Activated CD4-positive, alpha-beta T cell treated with anti-CD3 and anti-CD28 coated beads for 36 hours (primary cell): ENCODE measurements at regions of chr1 and their contacts with region 1.

Region 1: GRCh38 chr1:12124693-12125421 is 41.9 kb upstream of the TNFRSF1B start:
- DNase-seq: peak; percentile 86
- ATAC-seq: peak; percentile 35
- H3K4me3 Mint-ChIP-seq: no peak overlapping the region
- H3K27ac Mint-ChIP-seq: peak overlapping the region; percentile 20
- H3K4me1 Mint-ChIP-seq: peaks cover 49% of the 10 kb centered on the region
- H3K27me3 Mint-ChIP-seq: no peaks in the 10 kb centered on the region

Region 2: DNA sequence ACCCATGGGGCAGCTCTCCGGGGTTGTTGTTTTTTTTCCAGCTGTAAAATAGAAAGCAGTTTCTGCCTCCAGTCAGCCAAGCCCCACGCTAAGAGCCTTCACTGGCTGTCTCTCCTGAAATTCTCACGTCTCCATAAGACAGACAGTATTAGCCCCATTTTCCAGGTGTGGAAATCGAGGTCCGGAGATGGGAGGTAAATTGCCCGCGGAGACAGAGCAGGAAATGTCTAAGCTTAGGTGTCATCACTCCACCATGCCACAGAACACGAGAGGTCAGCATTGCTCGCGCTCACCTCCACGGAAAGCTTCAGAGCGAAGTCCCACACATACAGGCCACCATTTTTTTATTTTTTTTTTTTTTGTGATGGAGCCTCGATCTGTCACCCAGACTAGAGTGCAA is 17.1 kb before region 1 on chr1:
- CTCF ChIA-PET with region 1: interaction called, 11 read pairs
- POLR2A ChIA-PET with region 1: no interaction called
- intact Hi-C with region 1: no loop called
- DNase-seq: no peak
- ATAC-seq: no peak
- H3K4me3 Mint-ChIP-seq: no peak overlapping the region
- H3K27ac Mint-ChIP-seq: no peak overlapping the region
- H3K4me1 Mint-ChIP-seq: no peaks in the 10 kb centered on the region
- H3K27me3 Mint-ChIP-seq: no peaks in the 10 kb centered on the region

Region 3: DNA sequence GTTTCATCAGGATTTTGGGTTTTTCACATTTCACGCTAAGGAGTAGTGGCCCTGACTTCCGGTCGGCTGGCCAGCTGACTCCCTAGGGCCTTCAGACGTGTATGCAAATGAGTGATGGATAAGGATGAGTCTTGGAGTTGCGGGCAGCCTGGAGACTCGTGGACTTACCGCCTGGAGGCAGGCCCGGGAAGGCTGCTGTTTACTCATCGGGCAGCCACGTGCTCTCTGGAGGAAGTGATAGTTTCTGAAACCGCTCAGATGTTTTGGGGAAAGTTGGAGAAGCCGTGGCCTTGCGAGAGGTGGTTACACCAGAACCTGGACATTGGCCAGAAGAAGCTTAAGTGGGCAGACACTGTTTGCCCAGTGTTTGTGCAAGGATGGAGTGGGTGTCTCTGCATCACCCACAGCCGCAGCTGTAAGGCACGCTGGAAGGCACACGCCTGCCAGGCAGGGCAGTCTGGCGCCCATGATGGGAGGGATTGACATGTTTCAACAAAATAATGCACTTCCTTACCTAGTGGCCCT is 18.8 kb after region 1 on chr1:
- CTCF ChIA-PET with region 1: interaction called, 13 read pairs
- POLR2A ChIA-PET with region 1: no interaction called
- intact Hi-C with region 1: no loop called
- DNase-seq: peak; percentile 51
- ATAC-seq: peak; percentile 45
- H3K4me3 Mint-ChIP-seq: no peak overlapping the region
- H3K27ac Mint-ChIP-seq: peak overlapping the region; percentile 48
- H3K4me1 Mint-ChIP-seq: peaks cover 41% of the 10 kb centered on the region
- H3K27me3 Mint-ChIP-seq: no peaks in the 10 kb centered on the region

Region 4: GRCh38 chr1:12177999-12178441 is 53.2 kb after region 1 on chr1:
- CTCF ChIA-PET with region 1: interaction called, 48 read pairs
- POLR2A ChIA-PET with region 1: interaction called, 6 read pairs
- intact Hi-C with region 1: loop called (anchors 1 to 5 kb)
- DNase-seq: peak; percentile 97
- ATAC-seq: peak; percentile 78
- H3K4me3 Mint-ChIP-seq: peak overlapping the region; percentile 63
- H3K27ac Mint-ChIP-seq: peak overlapping the region; percentile 96
- H3K4me1 Mint-ChIP-seq: peaks cover 86% of the 10 kb centered on the region
- H3K27me3 Mint-ChIP-seq: no peaks in the 10 kb centered on the region

Region 5: GRCh38 chr1:12208764-12209494 is 84.1 kb after region 1 on chr1:
- CTCF ChIA-PET with region 1: interaction called, 265 read pairs
- POLR2A ChIA-PET with region 1: interaction called, 4 read pairs
- intact Hi-C with region 1: loop called (anchors 1 kb)
- DNase-seq: peak; percentile 93
- ATAC-seq: peak; percentile 68
- H3K4me3 Mint-ChIP-seq: no peak overlapping the region
- H3K27ac Mint-ChIP-seq: peak overlapping the region; percentile 17
- H3K4me1 Mint-ChIP-seq: peaks cover 47% of the 10 kb centered on the region
- H3K27me3 Mint-ChIP-seq: no peaks in the 10 kb centered on the region

Region 6: GRCh38 chr1:12229835-12230548 is 105.1 kb after region 1 on chr1 and contains the start of gene VPS13D:
- CTCF ChIA-PET with region 1: interaction called, 32 read pairs
- POLR2A ChIA-PET with region 1: no interaction called
- intact Hi-C with region 1: loop called in 1 of 2 experiments (anchors 1 kb)
- DNase-seq: peak; percentile 93
- ATAC-seq: peak; percentile 92
- H3K4me3 Mint-ChIP-seq: peak within 1 kb of the TSS; percentile 83
- H3K27ac Mint-ChIP-seq: peak within 1 kb of the TSS; percentile 47
- H3K4me1 Mint-ChIP-seq: peaks cover 23% of the 10 kb centered on the region
- H3K27me3 Mint-ChIP-seq: no peaks in the 10 kb centered on the region
- total RNA-seq, gene VPS13D: 20.6 to 22.9 TPM

Region 7: GRCh38 chr1:12619792-12620487 is 495.1 kb after region 1 on chr1:
- CTCF ChIA-PET with region 1: no interaction called
- POLR2A ChIA-PET with region 1: no interaction called
- intact Hi-C with region 1: loop called in 1 of 2 experiments (anchors 1 kb)
- DNase-seq: peak; percentile 88
- ATAC-seq: peak; percentile 39
- H3K4me3 Mint-ChIP-seq: peak overlapping the region; percentile 95
- H3K27ac Mint-ChIP-seq: no peak overlapping the region
- H3K4me1 Mint-ChIP-seq: peaks cover 43% of the 10 kb centered on the region
- H3K27me3 Mint-ChIP-seq: no peaks in the 10 kb centered on the region